Ascending aorta (tissue), 2 donors: ENCODE measurements at regions of chr17 and their contacts with region 1.

Region 1: GRCh38 chr17:34314279-34314678 is 5.0 kb upstream of the CCL8 start:
- DNase-seq: peak in 1 of 2 donors; percentile 73
- H3K4me3 ChIP-seq: no peak overlapping the region
- H3K27ac ChIP-seq: peak overlapping the region; percentile 57 to 65
- H3K4me1 ChIP-seq: peaks cover 2 to 14% of the 10 kb centered on the region in 2 donors
- H3K27me3 ChIP-seq: no peaks in the 10 kb centered on the region
- CTCF ChIP-seq: no peak

Region 2: DNA sequence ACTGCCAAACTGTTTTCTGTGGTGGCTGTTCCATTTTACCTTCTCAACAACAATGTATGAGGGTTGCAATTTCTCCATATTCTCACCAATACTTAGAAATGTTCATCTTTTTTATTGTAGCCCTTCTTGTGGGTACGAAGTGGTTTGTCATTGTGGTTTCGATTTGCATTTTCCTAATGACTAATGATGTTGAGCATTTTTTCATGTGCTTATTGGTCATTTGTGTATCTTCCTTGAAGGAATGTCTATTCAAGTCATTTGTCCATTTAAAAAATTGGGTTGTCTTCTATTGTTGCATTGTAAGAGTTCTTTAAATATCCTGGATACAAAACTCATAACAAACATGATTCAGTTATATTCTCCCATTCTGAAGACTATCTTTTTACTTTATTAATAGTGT is 106.7 kb before region 1 on chr17:
- intact Hi-C with region 1: no loop called
- DNase-seq: no peak
- H3K4me3 ChIP-seq: no peak overlapping the region
- H3K27ac ChIP-seq: no peak overlapping the region
- H3K4me1 ChIP-seq: peaks cover 0 to 3% of the 10 kb centered on the region in 2 donors
- H3K27me3 ChIP-seq: no peaks in the 10 kb centered on the region
- CTCF ChIP-seq: no peak

Region 3: DNA sequence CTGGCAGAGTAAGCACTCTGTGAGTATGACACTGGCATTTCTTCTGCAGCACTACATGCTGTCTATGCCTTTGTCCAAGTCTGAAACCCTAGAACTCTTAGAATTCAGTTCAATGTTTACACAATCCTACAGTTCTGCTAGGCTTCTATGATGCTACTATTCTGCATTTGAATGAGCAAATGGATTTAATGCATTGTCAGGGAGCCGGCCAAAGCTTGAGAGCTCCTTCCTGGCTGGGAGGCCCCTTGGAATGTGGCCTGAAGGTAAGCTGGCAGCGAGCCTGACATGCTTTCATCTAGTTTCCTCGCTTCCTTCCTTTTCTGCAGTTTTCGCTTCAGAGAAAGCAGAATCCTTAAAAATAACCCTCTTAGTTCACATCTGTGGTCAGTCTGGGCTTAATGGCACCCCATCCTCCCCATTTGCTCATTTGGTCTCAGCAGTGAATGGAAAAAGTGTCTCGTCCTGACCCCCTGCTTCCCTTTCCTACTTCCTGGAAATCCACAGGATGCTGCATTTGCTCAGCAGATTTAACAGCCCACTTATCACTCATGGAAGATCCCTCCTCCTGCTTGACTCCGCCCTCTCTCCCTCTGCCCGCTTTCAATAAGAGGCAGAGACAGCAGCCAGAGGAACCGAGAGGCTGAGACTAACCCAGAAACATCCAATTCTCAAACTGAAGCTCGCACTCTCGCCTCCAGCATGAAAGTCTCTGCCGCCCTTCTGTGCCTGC is 59.5 kb before region 1 on chr17 and contains the start of gene CCL2:
- intact Hi-C with region 1: loop called (anchors 5 kb)
- DNase-seq: peak in 1 of 2 donors; percentile 86
- H3K4me3 ChIP-seq: peak within 1 kb of the TSS; percentile 46 to 56
- H3K27ac ChIP-seq: peak within 1 kb of the TSS; percentile 87 to 89
- H3K4me1 ChIP-seq: peaks cover 39 to 60% of the 10 kb centered on the region in 2 donors
- H3K27me3 ChIP-seq: no peaks in the 10 kb centered on the region
- CTCF ChIP-seq: no peak
- total RNA-seq, gene CCL2: 162 TPM

Region 4: GRCh38 chr17:34361478-34362061 is 47.3 kb after region 1 on chr17:
- intact Hi-C with region 1: loop called (anchors 2 kb)
- DNase-seq: peak; percentile 45 to 92
- H3K4me3 ChIP-seq: no peak overlapping the region
- H3K27ac ChIP-seq: no peak overlapping the region
- H3K4me1 ChIP-seq: no peaks in the 10 kb centered on the region
- H3K27me3 ChIP-seq: no peaks in the 10 kb centered on the region
- CTCF ChIP-seq: peak; percentile 98

Region 5: DNA sequence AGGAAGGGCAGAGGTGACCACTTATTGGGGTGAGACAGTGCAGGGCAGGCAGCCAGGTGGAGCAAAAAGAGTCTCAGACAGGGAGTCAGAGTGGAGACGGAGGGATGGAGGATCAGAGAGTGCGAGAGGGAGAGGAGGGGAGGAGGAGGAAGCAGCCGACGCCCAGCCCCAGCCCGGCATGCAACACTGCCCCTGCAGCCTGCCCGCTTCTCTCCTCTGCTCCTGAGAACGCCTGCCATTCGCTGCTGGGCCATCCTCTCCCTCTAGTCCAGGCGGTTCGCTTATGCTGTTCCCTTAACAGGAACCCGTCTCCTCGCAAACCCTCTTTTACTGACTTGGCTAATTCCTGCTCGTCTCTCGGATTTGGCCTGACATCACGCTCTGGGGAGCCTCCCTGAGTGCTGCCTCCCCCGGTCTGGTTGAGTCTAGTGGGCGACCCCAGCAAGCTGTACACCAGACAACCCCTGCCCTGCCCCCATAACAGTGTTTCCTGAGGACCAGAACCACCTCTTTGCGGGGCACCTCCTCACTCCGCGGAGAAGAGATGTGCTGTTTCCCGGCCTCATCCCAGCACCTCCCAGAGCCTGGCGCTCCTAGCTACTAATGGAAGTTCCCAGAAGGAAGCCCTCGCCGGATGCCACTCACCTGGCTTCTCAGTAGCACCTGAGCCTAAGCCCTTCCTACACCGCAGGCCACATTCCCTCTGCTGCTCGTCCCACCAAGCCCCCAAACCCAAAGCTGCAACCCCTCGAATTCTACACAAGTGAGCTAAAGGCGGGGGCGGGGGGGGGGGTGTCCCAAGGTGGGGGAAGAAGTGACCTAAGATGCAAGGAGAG is 109.9 kb after region 1 on chr17:
- intact Hi-C with region 1: no loop called
- DNase-seq: no peak
- H3K4me3 ChIP-seq: no peak overlapping the region
- H3K27ac ChIP-seq: no peak overlapping the region
- H3K4me1 ChIP-seq: no peaks in the 10 kb centered on the region
- H3K27me3 ChIP-seq: no peaks in the 10 kb centered on the region
- CTCF ChIP-seq: no peak

Region 6: GRCh38 chr17:34926661-34927060 is 612.4 kb after region 1 on chr17:
- intact Hi-C with region 1: no loop called
- DNase-seq: no peak
- H3K4me3 ChIP-seq: no peak overlapping the region
- H3K27ac ChIP-seq: no peak overlapping the region
- H3K4me1 ChIP-seq: no peaks in the 10 kb centered on the region
- H3K27me3 ChIP-seq: no peaks in the 10 kb centered on the region
- CTCF ChIP-seq: no peak